ENCODE measurements at regions of chr5 and their contacts with region 1.

Region 1: GRCh38 chr5:177546258-177546741 is 8.1 kb downstream of the FAM193B start:
- DNase-seq: peak; percentile 82 to 94 (median 91)
- H3K4me3 ChIP-seq: peak overlapping the region in 1 of 3 experiments; percentile 43
- H3K4me3 Mint-ChIP-seq: peak overlapping the region in 1 of 2 donors; percentile 69
- H3K27ac ChIP-seq: peak overlapping the region; percentile 69 to 97
- H3K27ac Mint-ChIP-seq: peak overlapping the region; percentile 95 to 99 (median 98)
- H3K4me1 ChIP-seq: peaks cover 37 to 44% of the 10 kb centered on the region in 2 donors
- H3K4me1 Mint-ChIP-seq: peaks cover 43% of the 10 kb centered on the region
- H3K27me3 ChIP-seq: no peaks in the 10 kb centered on the region
- H3K27me3 Mint-ChIP-seq: peaks cover 0 to 1% (median 0%) of the 10 kb centered on the region in 3 donors
- CTCF ChIP-seq: no peak

Region 2: GRCh38 chr5:177509381-177509951 is 36.8 kb before region 1 on chr5 and contains the start of gene DOK3:
- intact Hi-C with region 1: loop called in 1 of 2 experiments (anchors 2 kb)
- DNase-seq: peak; percentile 81 to 86 (median 86)
- H3K4me3 ChIP-seq: peak within 1 kb of the TSS; percentile 82 to 100 (median 96)
- H3K4me3 Mint-ChIP-seq: peak within 1 kb of the TSS; percentile 98 to 99
- H3K27ac ChIP-seq: peak within 1 kb of the TSS; percentile 98 to 100
- H3K27ac Mint-ChIP-seq: peak within 1 kb of the TSS; percentile 99 to 100 (median 99)
- H3K4me1 ChIP-seq: peaks cover 49 to 70% of the 10 kb centered on the region in 2 donors
- H3K4me1 Mint-ChIP-seq: peaks cover 49% of the 10 kb centered on the region
- H3K27me3 ChIP-seq: no peaks in the 10 kb centered on the region
- H3K27me3 Mint-ChIP-seq: peaks cover 0 to 9% (median 3%) of the 10 kb centered on the region in 3 donors
- CTCF ChIP-seq: no peak
- polyA plus RNA-seq, gene DOK3: 62.8 to 196 (median 98.3) TPM

Region 3: GRCh38 chr5:177958696-177959095 is 412.4 kb after region 1 on chr5:
- intact Hi-C with region 1: no loop called
- DNase-seq: no peak
- H3K4me3 ChIP-seq: no peak overlapping the region
- H3K4me3 Mint-ChIP-seq: no peak overlapping the region
- H3K27ac ChIP-seq: no peak overlapping the region
- H3K27ac Mint-ChIP-seq: no peak overlapping the region
- H3K4me1 ChIP-seq: no peaks in the 10 kb centered on the region
- H3K4me1 Mint-ChIP-seq: no peaks in the 10 kb centered on the region
- H3K27me3 ChIP-seq: no peaks in the 10 kb centered on the region
- H3K27me3 Mint-ChIP-seq: peaks cover 2 to 4% (median 3%) of the 10 kb centered on the region in 3 donors
- CTCF ChIP-seq: no peak

Measured in CD14-positive monocyte (primary cell).